ENCODE measurements at regions of chr2 and their contacts with region 1.

Region 1: GRCh38 chr2:170836027-170836426 is 19.3 kb downstream of the GAD1 start:
- DNase-seq: no peak
- ATAC-seq: no peak
- H3K4me3 ChIP-seq: no peak overlapping the region
- H3K27ac ChIP-seq: no peak overlapping the region
- H3K4me1 ChIP-seq: no peaks in the 10 kb centered on the region
- H3K27me3 ChIP-seq: no peaks in the 10 kb centered on the region
- CTCF ChIP-seq: no peak

Region 2: DNA sequence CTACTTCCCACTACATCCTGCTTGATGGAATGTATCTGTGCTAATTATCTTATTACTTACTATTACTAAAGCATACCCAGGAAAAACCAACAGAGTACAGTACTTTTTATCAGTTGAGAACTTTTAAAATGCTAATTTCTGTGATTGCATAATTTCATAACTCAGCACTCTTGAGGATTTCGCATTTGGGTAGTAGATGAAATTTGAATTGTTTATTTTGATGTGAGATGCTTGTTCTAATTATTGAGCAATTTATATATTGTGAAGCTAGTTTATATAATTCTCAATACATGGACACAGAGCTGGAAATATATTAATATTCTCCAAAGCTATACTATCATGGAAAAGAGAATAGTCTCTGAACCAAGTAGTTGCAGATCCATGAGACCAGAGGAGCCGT is 225.4 kb before region 1 on chr2:
- CTCF ChIA-PET with region 1: no interaction called
- POLR2A ChIA-PET with region 1: no interaction called
- in situ Hi-C with region 1: no loop called
- intact Hi-C with region 1: no loop called
- DNase-seq: no peak
- ATAC-seq: no peak
- H3K4me3 ChIP-seq: no peak overlapping the region
- H3K27ac ChIP-seq: no peak overlapping the region
- H3K4me1 ChIP-seq: no peaks in the 10 kb centered on the region
- H3K27me3 ChIP-seq: peaks cover 6% of the 10 kb centered on the region; the same call in 1 of the 2 replicates
- CTCF ChIP-seq: no peak

Region 3: DNA sequence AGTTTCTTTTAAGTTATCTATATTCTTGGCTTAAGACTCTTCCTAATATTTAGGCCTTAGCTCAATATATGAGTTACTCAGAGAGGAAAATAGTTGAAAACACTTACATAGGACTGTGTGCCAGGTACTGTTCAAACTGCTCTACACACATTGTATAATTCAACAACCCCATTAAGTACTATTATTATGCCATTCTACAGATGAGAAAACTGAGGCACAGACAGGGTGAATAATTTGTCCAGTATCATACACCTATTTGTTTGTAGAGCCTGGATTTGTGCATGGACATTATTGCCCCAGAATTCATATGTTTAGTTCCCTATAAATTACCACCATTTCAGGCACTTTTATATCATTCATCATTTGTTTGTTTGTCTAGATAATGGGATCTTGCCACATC is 37.0 kb before region 1 on chr2:
- CTCF ChIA-PET with region 1: no interaction called
- POLR2A ChIA-PET with region 1: no interaction called
- in situ Hi-C with region 1: no loop called
- intact Hi-C with region 1: no loop called
- DNase-seq: no peak
- ATAC-seq: no peak
- H3K4me3 ChIP-seq: no peak overlapping the region
- H3K27ac ChIP-seq: no peak overlapping the region
- H3K4me1 ChIP-seq: no peaks in the 10 kb centered on the region
- H3K27me3 ChIP-seq: no peaks in the 10 kb centered on the region; the same call in 1 of the 2 replicates
- CTCF ChIP-seq: no peak

Region 4: GRCh38 chr2:170851635-170852034 is 15.6 kb after region 1 on chr2:
- CTCF ChIA-PET with region 1: interaction called, 11 read pairs
- POLR2A ChIA-PET with region 1: no interaction called
- in situ Hi-C with region 1: no loop called
- intact Hi-C with region 1: no loop called
- DNase-seq: no peak
- ATAC-seq: no peak
- H3K4me3 ChIP-seq: no peak overlapping the region
- H3K27ac ChIP-seq: no peak overlapping the region
- H3K4me1 ChIP-seq: no peaks in the 10 kb centered on the region
- H3K27me3 ChIP-seq: no peaks in the 10 kb centered on the region
- CTCF ChIP-seq: no peak